Activated CD8-positive, alpha-beta T cell treated with anti-CD3 and anti-CD28 coated beads for 36 hours (primary cell): ENCODE measurements at regions of chr17 and their contacts with region 1.

Region 1: DNA sequence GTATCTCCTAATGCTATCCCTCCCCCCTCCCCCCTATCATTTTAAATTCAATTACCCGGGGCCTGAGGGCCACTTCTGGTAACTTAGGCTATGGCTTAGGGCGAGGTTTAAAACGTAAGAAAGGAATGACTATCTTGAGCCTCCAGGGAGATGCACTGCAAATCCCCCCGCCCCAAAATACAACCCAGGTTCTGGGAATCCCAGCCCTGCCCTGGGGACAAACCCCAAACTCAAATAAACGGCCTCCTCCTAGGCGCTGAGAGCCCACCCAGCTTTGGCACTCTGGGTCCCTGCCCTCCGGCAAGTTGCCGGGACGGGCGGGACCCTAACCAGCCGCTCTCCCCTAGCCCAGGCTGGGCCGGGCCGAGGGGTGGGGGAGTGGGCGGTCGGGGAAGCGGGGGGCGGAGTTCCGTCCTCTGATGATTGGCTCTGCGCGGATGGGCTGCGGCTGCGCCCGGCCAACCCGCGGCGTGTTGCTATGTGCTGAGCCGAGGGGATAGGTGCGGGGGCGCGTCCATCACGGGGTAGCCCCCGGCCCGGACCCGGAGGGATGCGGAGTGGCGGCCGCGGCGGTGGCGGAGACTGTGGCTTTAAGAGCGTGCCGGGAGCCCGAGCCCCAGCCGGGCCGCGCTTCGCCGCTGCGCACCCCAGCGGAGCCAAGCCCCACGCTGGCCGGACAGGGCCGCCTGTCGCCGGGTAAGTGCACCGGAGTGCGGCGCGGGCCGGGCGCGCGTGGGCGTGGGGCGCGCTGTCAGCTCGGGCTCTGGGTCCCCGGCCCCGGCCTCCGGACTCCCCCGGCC is at the start of gene YPEL2:
- DNase-seq: peak; percentile 92
- ATAC-seq: peak; percentile 91
- H3K4me3 Mint-ChIP-seq: peak within 1 kb of the TSS; percentile 86
- H3K27ac Mint-ChIP-seq: peak within 1 kb of the TSS; percentile 74
- H3K4me1 Mint-ChIP-seq: peaks cover 67% of the 10 kb centered on the region
- H3K27me3 Mint-ChIP-seq: no peaks in the 10 kb centered on the region
- CTCF ChIP-seq: no peak
- total RNA-seq, gene YPEL2: 4.2 to 4.9 TPM

Region 2: GRCh38 chr17:59342681-59343131 is 11.4 kb after region 1 on chr17:
- CTCF ChIA-PET with region 1: interaction called, 16 read pairs
- POLR2A ChIA-PET with region 1: interaction called, 3 read pairs
- intact Hi-C with region 1: no loop called
- DNase-seq: peak; percentile 61
- ATAC-seq: peak; percentile 88
- H3K4me3 Mint-ChIP-seq: no peak overlapping the region
- H3K27ac Mint-ChIP-seq: peak overlapping the region; percentile 81
- H3K4me1 Mint-ChIP-seq: peaks cover 56% of the 10 kb centered on the region
- H3K27me3 Mint-ChIP-seq: no peaks in the 10 kb centered on the region
- CTCF ChIP-seq: no peak

Region 3: GRCh38 chr17:59372138-59372857 is 41.0 kb after region 1 on chr17:
- CTCF ChIA-PET with region 1: interaction called, 9 read pairs
- POLR2A ChIA-PET with region 1: interaction called, 4 read pairs
- intact Hi-C with region 1: loop called (anchors 5 kb)
- DNase-seq: peak; percentile 18
- ATAC-seq: peak; percentile 58
- H3K4me3 Mint-ChIP-seq: no peak overlapping the region
- H3K27ac Mint-ChIP-seq: peak overlapping the region; percentile 91
- H3K4me1 Mint-ChIP-seq: peaks cover 73% of the 10 kb centered on the region
- H3K27me3 Mint-ChIP-seq: no peaks in the 10 kb centered on the region
- CTCF ChIP-seq: no peak

Region 4: GRCh38 chr17:59400858-59401257 is 69.5 kb after region 1 on chr17:
- CTCF ChIA-PET with region 1: interaction called, 10 read pairs
- POLR2A ChIA-PET with region 1: no interaction called
- intact Hi-C with region 1: no loop called
- DNase-seq: no peak
- ATAC-seq: no peak
- H3K4me3 Mint-ChIP-seq: no peak overlapping the region
- H3K27ac Mint-ChIP-seq: no peak overlapping the region
- H3K4me1 Mint-ChIP-seq: peaks cover 2% of the 10 kb centered on the region
- H3K27me3 Mint-ChIP-seq: no peaks in the 10 kb centered on the region
- CTCF ChIP-seq: no peak

Region 5: DNA sequence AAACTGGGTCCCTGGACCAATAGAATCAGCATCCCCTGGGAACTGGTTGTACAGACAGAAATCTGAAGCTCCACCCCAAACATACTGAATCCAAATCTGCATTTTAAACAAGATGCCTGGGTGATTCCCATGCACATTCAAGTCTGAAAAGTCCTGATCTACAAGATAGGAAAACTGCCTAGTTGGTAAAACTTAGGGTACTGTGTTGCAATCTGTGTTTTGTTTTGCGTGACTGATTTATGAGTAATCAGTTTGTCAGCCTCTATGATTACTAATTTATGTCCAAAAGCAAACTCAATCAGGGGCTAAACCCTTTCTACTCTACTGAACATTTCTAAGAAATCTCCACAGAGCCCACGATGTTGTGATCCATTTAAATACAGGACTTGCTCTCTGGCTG is 103.9 kb after region 1 on chr17:
- CTCF ChIA-PET with region 1: interaction called, 114 read pairs
- POLR2A ChIA-PET with region 1: interaction called, 4 read pairs
- intact Hi-C with region 1: loop called (anchors 5 kb)
- DNase-seq: no peak
- ATAC-seq: peak; percentile 82
- H3K4me3 Mint-ChIP-seq: no peak overlapping the region
- H3K27ac Mint-ChIP-seq: peak overlapping the region; percentile 43
- H3K4me1 Mint-ChIP-seq: peaks cover 43% of the 10 kb centered on the region
- H3K27me3 Mint-ChIP-seq: no peaks in the 10 kb centered on the region
- CTCF ChIP-seq: no peak

Region 6: DNA sequence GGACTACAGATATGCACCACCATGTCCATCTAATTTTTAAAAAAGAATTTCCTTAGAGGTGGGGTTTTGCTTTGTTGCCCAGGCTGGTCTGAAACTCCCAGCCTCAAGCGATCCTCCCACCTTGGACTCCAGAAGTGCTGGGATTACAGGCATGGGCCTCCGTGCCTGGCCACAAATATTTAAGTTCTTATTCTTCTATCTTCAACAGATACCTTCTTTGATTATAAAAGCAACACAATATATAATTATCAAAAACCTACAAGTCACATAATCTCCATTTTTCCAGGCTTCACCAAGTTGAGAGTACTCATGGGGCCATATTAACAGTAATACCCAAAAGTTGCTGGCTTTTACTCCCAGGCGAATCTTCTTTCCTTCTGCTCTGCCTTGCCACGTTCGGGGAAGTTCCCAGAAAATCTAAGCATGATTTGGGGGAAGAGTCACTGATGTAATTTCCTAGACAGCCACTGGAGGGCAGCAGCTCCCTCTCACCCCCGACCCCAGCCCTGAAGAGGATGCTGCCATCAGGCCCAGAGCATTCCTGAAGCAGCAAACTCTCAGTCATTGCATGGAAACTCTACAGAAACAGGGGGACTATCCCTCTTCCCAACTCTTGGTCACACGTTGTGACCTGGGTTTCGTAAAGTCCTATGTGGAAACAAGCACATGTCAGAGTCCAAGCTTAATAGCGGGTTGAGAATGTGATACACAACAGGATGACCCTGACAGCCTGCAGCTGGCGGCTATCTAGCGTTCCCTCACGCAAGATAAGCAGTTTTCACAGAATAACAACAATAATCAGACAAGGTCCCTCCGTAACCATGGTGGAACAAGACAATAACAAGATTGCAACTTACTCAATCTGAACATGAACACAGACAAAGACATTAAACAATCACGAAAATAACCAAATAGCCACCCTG is 190.1 kb after region 1 on chr17:
- CTCF ChIA-PET with region 1: interaction called, 10 read pairs
- POLR2A ChIA-PET with region 1: no interaction called
- intact Hi-C with region 1: no loop called
- DNase-seq: peak; percentile 72
- ATAC-seq: peak; percentile 83
- H3K4me3 Mint-ChIP-seq: no peak overlapping the region
- H3K27ac Mint-ChIP-seq: no peak overlapping the region
- H3K4me1 Mint-ChIP-seq: peaks cover 2% of the 10 kb centered on the region
- H3K27me3 Mint-ChIP-seq: peaks cover 7% of the 10 kb centered on the region
- CTCF ChIP-seq: peak; percentile 97